ENCODE measurements at regions of chr16 and their contacts with region 1.

Region 1: DNA sequence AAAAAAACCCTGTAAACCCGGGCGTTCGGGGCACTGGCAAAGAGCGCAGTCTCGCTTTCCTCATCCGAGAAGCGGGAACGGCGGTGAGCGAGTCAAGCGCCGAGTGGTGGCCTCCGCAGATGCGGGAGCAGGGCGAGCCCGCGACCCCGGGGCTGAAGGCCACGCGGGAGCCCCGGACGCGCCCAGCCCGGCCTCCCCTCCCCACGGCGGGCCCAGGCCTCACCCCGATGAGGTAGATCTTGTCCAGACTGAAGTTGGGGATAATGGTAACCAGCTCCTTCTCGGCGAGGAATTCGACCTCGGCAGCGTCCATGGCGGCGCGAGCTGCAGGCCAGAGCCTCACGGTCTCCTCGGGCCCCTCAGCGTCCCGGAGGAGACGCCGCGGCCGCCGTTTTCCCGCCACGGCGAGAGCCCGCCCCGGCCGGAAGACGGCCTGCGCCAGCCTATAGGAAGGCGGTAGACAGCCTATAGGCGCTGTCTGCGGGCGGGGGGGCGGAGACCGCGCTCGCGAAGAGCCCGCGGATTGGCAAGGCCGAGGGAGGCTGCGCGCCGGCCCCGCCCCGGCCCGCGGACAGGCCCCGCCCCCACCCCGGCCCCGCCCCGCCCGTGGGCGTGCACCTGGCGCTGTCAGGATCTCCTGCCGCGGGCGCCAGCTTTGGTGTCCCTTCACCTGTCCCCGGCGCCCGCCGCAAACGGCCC is at the start of gene GINS2:
- DNase-seq: peak; percentile 91 to 97
- ATAC-seq: peak; percentile 99
- H3K4me3 ChIP-seq: peak within 1 kb of the TSS; percentile 81
- H3K27ac ChIP-seq: peak within 1 kb of the TSS; percentile 63 to 84
- H3K4me1 ChIP-seq: peaks cover 9% of the 10 kb centered on the region; the same call in 1 of the 3 replicates
- CTCF ChIP-seq: no peak
- EP300 ChIP-seq: no peak
- POLR2A ChIP-seq: no peak
- RAD21 ChIP-seq: no peak
- polyA plus RNA-seq, gene GINS2: 23.4 and 28.7 TPM in 2 replicates

Region 2: GRCh38 chr16:85659805-85660495 is 28.8 kb before region 1 on chr16:
- CTCF ChIA-PET with region 1: interaction called, 13 read pairs
- POLR2A ChIA-PET with region 1: no interaction called
- DNase-seq: peak; percentile 58 to 88
- ATAC-seq: peak; percentile 76 to 87
- H3K4me3 ChIP-seq: no peak overlapping the region
- H3K27ac ChIP-seq: no peak overlapping the region
- H3K4me1 ChIP-seq: no peaks in the 10 kb centered on the region
- CTCF ChIP-seq: peak; percentile 72
- EP300 ChIP-seq: no peak
- POLR2A ChIP-seq: no peak
- RAD21 ChIP-seq: peak; percentile 43 to 61; a peak in 3 of 5 replicates

Region 3: DNA sequence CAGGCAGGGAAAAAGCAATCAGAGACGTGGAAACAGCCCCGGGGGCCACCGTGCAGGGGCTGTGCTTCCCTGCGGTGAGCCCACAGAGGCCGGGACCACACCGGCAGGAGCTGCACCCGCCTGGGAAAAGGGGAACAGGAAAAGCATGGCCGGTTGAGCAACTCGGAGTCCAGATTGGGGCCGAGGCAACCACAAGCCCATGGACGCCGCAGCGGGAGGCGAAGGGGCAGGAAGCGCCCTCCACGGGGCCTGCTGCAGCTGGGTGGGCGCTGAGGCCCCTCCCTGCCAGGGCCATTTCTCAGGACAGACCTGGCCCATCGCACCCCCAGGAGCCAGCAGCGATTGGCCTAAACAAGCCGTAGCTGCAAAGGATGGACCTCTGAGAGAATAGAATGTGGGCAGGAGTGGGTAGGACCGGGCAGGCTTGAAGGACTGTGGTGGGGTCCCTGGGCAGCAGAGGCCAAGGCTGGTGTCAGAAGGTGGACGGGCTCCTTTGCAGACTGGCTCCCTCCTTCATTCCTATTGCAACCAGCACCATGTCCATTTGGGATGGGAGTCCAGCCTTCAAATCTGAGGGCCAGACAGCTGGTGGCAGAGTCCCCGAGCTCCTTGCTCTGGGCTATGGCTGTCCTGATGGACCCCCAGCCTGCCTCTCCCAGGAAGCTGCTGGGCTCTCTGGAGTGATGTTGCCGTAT is 141.2 kb after region 1 on chr16:
- CTCF ChIA-PET with region 1: no interaction called
- POLR2A ChIA-PET with region 1: no interaction called
- DNase-seq: no peak
- ATAC-seq: no peak
- H3K4me3 ChIP-seq: no peak overlapping the region
- H3K27ac ChIP-seq: no peak overlapping the region
- H3K4me1 ChIP-seq: no peaks in the 10 kb centered on the region
- CTCF ChIP-seq: no peak
- EP300 ChIP-seq: no peak
- POLR2A ChIP-seq: no peak
- RAD21 ChIP-seq: no peak

Region 4: DNA sequence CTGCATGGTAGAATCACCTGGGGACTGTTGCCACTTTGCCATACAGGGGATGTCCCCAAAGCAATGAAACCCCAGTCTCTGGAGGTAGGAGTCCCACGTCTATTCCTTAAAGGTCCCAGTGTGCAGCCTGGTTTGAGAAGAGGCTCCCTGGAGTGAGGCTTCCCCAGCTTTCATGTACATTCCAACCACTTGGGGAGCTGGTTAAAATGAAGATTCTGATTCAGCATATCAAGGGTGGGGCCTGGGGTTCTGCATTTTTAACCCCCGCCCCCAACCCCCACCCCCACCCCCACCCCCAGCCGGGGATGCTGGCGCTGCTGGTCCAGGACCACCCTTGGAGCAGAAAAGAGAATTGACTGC is 1130.8 kb after region 1 on chr16:
- CTCF ChIA-PET with region 1: no interaction called
- POLR2A ChIA-PET with region 1: no interaction called
- DNase-seq: no peak
- ATAC-seq: peak; percentile 38 to 61; a peak in 3 of 6 replicates
- H3K4me3 ChIP-seq: no peak overlapping the region
- H3K27ac ChIP-seq: no peak overlapping the region
- H3K4me1 ChIP-seq: no peaks in the 10 kb centered on the region
- CTCF ChIP-seq: no peak
- EP300 ChIP-seq: no peak
- POLR2A ChIP-seq: no peak
- RAD21 ChIP-seq: no peak